ENCODE measurements at regions of chr12 and their contacts with region 1.

Region 1: DNA sequence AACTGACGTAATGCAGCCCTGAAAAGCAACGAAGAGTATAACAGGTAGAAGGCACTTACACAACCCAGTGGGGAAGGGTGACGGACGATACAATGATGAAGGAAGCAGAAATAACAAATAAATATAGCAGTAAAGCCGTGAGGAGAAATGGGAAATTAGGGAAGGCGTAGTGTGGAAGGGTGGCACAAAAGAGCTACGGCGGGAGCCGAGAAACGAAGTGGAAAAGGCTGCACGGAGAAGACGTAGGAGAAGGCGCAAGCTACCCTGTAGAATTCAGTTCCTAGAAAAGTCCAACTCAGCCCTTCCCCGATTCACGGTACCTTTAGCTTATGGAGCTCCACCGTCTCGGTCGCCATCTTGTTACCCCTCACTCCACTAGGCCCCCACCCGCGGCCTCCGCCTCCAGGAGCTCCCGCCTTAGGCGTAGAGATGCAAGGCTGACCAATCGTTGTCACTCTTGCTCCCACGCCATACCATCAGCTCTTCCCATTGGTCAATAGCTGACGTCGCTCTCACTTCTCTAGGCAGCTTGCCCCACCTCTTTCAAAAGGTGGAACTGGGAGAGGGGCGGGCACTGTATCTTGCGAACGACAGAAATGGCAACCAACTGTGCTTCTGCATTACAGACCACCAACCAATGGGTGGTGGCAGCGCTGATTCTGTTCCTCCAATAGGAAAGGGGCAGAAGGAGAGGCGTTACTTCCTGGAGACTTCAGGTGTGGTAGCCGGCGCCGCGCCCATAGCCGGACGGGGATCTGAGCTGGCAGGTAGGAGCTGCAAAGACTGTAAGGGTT is at the starts of genes ORMDL2 and SARNP:
- DNase-seq: peak; percentile 100
- H3K4me3 Mint-ChIP-seq: no peak within 1 kb of the TSS
- H3K27ac Mint-ChIP-seq: no peak within 1 kb of the TSS
- H3K4me1 Mint-ChIP-seq: peaks cover 19% of the 10 kb centered on the region
- H3K27me3 Mint-ChIP-seq: no peaks in the 10 kb centered on the region
- CTCF ChIP-seq: no peak
- total RNA-seq, gene ORMDL2: 54.6 and 55.9 TPM in 2 replicates
- total RNA-seq, gene SARNP: 39.2 and 61.1 TPM in 2 replicates

Region 2: GRCh38 chr12:55746147-55746912 is 71.2 kb before region 1 on chr12:
- CTCF ChIA-PET with region 1: interaction called, 3 read pairs
- POLR2A ChIA-PET with region 1: interaction called, 14 read pairs
- intact Hi-C with region 1: no loop called
- DNase-seq: no peak
- H3K4me3 Mint-ChIP-seq: no peak overlapping the region
- H3K27ac Mint-ChIP-seq: no peak overlapping the region
- H3K4me1 Mint-ChIP-seq: peaks cover 23% of the 10 kb centered on the region
- H3K27me3 Mint-ChIP-seq: peaks cover 17% of the 10 kb centered on the region
- CTCF ChIP-seq: no peak

Region 3: DNA sequence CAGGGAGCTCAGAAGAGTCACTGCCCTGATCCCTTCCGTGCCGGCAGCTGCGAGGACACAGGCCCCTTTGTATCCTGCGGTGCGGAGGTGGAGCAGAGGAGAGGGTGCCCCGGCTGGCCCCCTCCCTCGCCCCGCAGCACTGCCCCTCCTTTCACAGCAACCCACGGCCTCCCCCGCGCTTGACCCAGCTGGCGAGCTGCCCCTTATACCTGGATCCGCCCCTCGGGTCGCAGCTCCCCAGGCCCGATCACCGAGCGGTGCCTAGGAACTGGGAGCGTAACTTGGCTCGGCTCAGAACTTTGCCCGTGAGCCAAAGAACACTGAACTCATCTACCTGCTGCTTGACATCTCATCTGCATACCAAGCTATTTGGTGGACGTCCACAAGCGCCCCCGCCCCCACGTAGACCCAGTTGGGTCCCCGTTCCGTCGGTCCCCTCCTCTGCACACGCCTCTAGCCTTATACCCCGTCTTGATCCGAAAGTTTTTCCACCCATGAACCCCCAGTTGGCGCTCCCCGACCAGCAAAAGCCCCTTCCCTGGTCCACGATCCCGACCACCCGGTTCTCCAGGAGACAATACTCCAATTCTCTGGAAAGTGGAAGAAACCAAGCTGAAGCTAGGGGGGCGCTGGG is 12.5 kb after region 1 on chr12:
- CTCF ChIA-PET with region 1: interaction called, 11 read pairs
- POLR2A ChIA-PET with region 1: interaction called, 129 read pairs
- intact Hi-C with region 1: no loop called
- DNase-seq: peak; percentile 13
- H3K4me3 Mint-ChIP-seq: peak overlapping the region; percentile 97
- H3K27ac Mint-ChIP-seq: peak overlapping the region; percentile 92
- H3K4me1 Mint-ChIP-seq: peaks cover 28% of the 10 kb centered on the region
- H3K27me3 Mint-ChIP-seq: no peaks in the 10 kb centered on the region
- CTCF ChIP-seq: no peak

Region 4: GRCh38 chr12:55926738-55927587 is 109.4 kb after region 1 on chr12:
- CTCF ChIA-PET with region 1: interaction called, 19 read pairs
- POLR2A ChIA-PET with region 1: interaction called, 207 read pairs
- intact Hi-C with region 1: loop called (anchors 1 kb)
- DNase-seq: peak; percentile 91
- H3K4me3 Mint-ChIP-seq: peak overlapping the region; percentile 95
- H3K27ac Mint-ChIP-seq: peak overlapping the region; percentile 93
- H3K4me1 Mint-ChIP-seq: peaks cover 38% of the 10 kb centered on the region
- H3K27me3 Mint-ChIP-seq: no peaks in the 10 kb centered on the region
- CTCF ChIP-seq: peak; percentile 85

Region 5: GRCh38 chr12:55966408-55967281 is 149.1 kb after region 1 on chr12 and contains the start of gene CDK2:
- CTCF ChIA-PET with region 1: no interaction called
- POLR2A ChIA-PET with region 1: interaction called, 10 read pairs
- intact Hi-C with region 1: no loop called
- DNase-seq: peak; percentile 88
- H3K4me3 Mint-ChIP-seq: peak within 1 kb of the TSS; percentile 93
- H3K27ac Mint-ChIP-seq: peak within 1 kb of the TSS; percentile 95
- H3K4me1 Mint-ChIP-seq: peaks cover 28% of the 10 kb centered on the region
- H3K27me3 Mint-ChIP-seq: no peaks in the 10 kb centered on the region
- CTCF ChIP-seq: no peak
- total RNA-seq, gene CDK2: 17.9 and 23.8 TPM in 2 replicates

Region 6: DNA sequence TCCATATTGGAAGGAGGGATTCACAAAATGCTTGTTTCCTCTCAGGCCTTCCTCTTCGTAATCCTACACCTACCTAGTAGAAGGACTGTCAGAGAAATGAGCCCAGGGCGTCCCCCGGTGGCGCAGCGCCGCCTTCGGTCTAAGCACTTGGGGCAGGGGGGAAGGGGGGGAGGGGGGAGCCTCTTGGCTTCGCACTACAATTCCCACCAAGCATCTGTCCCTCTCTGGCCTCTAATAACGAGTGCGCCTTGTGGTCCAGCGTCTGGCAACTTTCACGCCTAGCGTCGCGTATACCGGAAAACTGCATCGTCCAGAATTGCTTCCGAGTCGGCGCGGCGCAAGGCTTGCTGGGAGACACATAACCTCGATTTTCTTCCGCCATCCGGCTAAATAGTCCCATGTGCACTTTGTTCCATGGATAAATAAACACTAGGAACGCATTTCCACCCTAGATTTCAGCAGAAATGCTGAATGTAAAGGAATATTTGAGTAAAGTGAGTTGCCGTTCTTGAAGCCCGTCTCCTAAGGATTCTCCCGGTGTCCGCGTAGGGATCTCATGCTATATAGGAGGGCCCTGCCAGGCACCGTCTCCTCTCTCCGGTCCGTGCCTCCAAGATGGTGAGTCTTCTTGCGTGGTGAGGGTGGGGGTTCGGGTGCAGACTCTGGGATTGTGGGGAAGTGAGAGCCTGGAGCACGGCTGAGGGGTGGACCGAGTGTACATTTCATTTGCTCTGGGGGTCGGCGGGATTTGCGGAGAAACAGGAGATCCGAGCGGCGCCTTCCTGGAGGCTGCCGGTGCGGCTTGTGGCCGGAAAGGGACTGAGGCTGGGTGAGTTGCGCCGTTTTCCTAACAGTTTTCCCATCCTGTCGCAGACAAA is 224.2 kb after region 1 on chr12 and contains the start of gene RPS26:
- CTCF ChIA-PET with region 1: interaction called, 4 read pairs
- POLR2A ChIA-PET with region 1: no interaction called
- intact Hi-C with region 1: loop called (anchors 5 kb)
- DNase-seq: peak; percentile 99
- H3K4me3 Mint-ChIP-seq: peak within 1 kb of the TSS; percentile 81
- H3K27ac Mint-ChIP-seq: peak within 1 kb of the TSS; percentile 91
- H3K4me1 Mint-ChIP-seq: peaks cover 7% of the 10 kb centered on the region
- H3K27me3 Mint-ChIP-seq: no peaks in the 10 kb centered on the region
- CTCF ChIP-seq: peak; percentile 33
- total RNA-seq, gene RPS26: 45.1 and 67.3 TPM in 2 replicates